B cell (primary cell): ENCODE measurements at regions of chr15 and their contacts with region 1.

Region 1: DNA sequence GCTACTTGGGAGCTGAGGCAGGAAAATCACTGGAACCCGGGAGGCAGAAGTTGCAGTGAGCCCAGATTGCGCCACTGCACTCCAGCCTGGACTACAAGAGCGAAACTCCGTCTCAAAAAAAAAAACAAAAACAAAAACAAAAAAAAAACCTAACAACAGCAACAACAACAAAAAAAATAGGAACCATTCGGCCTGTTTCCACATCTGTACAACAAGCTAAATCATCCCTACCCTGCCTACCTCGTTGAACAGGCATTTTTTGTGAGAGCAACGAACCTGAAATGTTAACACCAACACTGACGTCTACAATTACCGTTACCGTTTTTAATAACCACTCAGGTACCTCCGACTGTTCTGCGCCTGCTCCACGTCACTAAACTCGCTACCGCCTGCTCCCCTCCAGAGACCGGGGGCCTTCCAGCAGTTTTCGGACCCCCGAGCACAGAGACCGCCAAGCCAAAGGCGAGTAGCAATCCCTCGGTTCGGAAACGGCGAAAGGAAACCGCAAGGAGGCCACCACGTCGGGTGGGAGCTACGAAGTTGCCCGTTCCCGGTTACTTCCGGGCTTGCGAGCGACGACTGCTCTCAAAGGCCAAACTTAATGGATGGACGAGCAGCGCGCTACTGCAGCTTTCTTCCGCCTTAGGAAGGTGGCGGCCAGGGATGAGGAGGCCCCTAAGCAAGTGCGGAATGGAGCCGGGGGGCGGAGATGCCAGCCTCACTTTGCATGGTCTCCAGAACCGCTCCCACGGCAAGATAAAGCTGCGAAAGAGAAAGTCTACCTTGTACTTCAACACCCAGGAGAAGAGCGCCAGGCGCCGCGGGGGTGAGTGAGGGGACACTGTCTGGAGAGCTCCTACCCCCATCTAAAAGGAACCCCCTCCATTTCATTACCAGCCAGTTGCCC is at the starts of genes PIGB and PIGBOS1:
- DNase-seq: peak; percentile 96
- ATAC-seq: peak; percentile 84
- H3K4me3 ChIP-seq: peak within 1 kb of the TSS; percentile 81 to 96 (median 89)
- H3K4me3 Mint-ChIP-seq: peak within 1 kb of the TSS; percentile 100
- H3K27ac ChIP-seq: peak within 1 kb of the TSS; percentile 96 to 98
- H3K27ac Mint-ChIP-seq: peak within 1 kb of the TSS; percentile 100
- H3K4me1 ChIP-seq: peaks cover 28 to 40% of the 10 kb centered on the region in 2 donors
- H3K4me1 Mint-ChIP-seq: peaks cover 62% of the 10 kb centered on the region
- H3K27me3 ChIP-seq: no peaks in the 10 kb centered on the region
- H3K27me3 Mint-ChIP-seq: no peaks in the 10 kb centered on the region
- CTCF ChIP-seq: no peak
- total RNA-seq, gene PIGB: 39.2 and 41.7 TPM in 2 replicates
- total RNA-seq, gene PIGBOS1: 14.6 and 16.4 TPM in 2 replicates

Region 2: DNA sequence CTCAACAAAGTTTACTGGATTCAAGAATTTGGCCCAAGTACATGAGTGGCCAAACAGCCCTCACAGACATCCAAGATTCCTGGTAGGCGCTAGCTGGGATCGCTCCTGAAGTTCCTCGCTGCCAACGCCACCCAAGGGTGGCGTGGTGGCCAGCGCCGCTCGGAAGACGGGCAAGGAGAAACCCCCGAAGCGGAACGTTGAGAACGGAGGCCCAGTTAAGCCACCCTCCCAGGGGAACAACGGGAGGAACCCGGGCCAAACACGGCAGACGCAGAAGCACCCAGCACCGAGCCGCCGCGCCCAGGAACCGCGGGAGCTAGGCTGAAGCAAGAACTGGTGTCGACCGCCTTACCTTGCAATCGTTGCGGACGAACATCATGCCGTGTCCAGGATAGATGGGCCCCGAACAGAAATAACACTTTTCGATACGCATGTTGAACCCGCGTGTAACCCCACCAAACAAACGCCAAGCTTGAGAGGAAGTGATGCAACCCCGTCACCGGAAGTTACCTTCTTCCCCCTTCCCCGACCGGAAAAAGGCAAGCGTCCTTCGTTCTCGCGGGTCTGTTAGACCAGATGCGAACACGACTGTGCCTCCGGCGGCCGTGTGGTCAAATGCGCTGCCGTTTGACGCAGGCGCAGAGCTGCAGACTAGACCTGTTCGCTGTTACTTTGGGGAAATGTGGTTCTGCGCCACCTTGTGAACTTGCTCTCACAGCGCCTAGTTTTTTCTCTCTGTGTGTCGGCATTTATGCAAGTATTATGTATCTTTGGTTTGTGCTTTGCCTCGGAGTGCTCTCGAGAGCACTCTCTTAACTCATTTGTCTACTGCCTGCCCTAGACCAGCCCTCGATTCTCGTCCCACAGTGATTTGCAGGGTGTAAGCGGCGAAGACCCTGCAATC is 122.1 kb before region 1 on chr15 and contains the start of gene RSL24D1:
- CTCF ChIA-PET with region 1: interaction called, 4 read pairs
- POLR2A ChIA-PET with region 1: interaction called, 8 read pairs
- intact Hi-C with region 1: loop called (anchors 1 kb)
- DNase-seq: peak; percentile 98
- ATAC-seq: peak; percentile 95
- H3K4me3 ChIP-seq: peak within 1 kb of the TSS; percentile 78 to 97 (median 90)
- H3K4me3 Mint-ChIP-seq: no peak within 1 kb of the TSS
- H3K27ac ChIP-seq: peak within 1 kb of the TSS; percentile 92
- H3K27ac Mint-ChIP-seq: no peak within 1 kb of the TSS
- H3K4me1 ChIP-seq: peaks cover 29 to 30% of the 10 kb centered on the region in 2 donors
- H3K4me1 Mint-ChIP-seq: peaks cover 9% of the 10 kb centered on the region
- H3K27me3 ChIP-seq: no peaks in the 10 kb centered on the region
- H3K27me3 Mint-ChIP-seq: no peaks in the 10 kb centered on the region
- CTCF ChIP-seq: peak; percentile 67
- total RNA-seq, gene RSL24D1: 69.0 and 80.7 TPM in 2 replicates

Region 3: GRCh38 chr15:55344206-55344605 is 25.4 kb after region 1 on chr15:
- CTCF ChIA-PET with region 1: no interaction called
- POLR2A ChIA-PET with region 1: no interaction called
- intact Hi-C with region 1: no loop called
- DNase-seq: no peak
- ATAC-seq: no peak
- H3K4me3 ChIP-seq: no peak overlapping the region
- H3K4me3 Mint-ChIP-seq: no peak overlapping the region
- H3K27ac ChIP-seq: no peak overlapping the region
- H3K27ac Mint-ChIP-seq: peak overlapping the region; percentile 12
- H3K4me1 ChIP-seq: no peaks in the 10 kb centered on the region
- H3K4me1 Mint-ChIP-seq: no peaks in the 10 kb centered on the region
- H3K27me3 ChIP-seq: no peaks in the 10 kb centered on the region
- H3K27me3 Mint-ChIP-seq: no peaks in the 10 kb centered on the region
- CTCF ChIP-seq: no peak